Activated CD4-positive, alpha-beta T cell treated with anti-CD3 and anti-CD28 coated beads, Interleukin-2, amount 10 ng/mL, durations not matched to agents 24 days and 14 days (primary cell): ENCODE measurements at regions of chr6 and their contacts with region 1.

Region 1: DNA sequence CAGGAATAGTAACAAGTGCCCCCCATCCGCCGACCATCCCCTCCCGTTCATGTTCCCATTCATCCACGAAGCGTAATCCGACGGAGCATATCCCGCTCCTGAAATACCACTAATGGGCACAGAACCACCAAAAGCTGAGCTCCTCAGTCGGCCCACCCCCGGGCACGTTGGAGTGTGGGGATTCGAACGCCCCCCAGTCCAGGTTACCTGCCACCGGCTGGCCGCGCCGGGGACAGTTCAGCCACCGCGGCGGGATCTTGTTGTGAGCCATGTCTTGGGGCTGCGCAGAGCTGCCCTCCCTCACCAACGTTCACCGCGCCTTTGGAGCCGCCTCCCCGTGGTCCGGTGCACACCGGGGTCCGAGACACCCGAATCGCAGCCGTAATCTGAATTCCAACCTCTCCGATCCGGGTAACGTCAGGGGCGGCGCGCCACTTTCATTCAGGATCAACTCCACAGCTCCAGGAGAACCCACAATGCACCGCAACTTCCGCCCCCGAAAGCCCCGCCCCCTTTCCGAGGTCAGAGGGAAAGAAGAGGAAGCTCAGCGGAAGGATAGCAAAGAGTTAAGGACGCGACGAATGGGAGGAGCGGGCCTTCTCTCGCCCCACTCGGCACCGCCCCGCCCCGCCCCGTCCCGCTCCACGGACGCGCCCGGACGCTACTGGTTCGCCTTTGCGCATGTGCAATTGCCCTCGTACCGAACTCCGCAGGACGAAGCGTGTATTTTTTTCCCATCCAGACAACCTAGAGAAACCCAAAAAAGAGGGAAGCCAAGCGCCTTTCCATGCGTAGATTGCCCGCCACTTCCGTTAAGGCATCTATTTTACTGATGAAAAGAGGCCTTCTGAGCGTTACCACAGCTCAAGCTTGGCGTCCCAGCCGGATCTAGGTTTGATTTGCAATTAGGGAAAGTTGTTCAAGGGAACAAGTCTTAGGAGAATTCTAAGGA is at the start of gene RNGTT:
- DNase-seq: peak; percentile 99
- H3K4me3 Mint-ChIP-seq: peak within 1 kb of the TSS; percentile 98
- H3K27ac Mint-ChIP-seq: peak within 1 kb of the TSS; percentile 94
- H3K4me1 Mint-ChIP-seq: peaks cover 25% of the 10 kb centered on the region
- H3K27me3 Mint-ChIP-seq: peaks cover 4% of the 10 kb centered on the region
- total RNA-seq, gene RNGTT: 23.8 and 25.9 TPM in 2 replicates

Region 2: DNA sequence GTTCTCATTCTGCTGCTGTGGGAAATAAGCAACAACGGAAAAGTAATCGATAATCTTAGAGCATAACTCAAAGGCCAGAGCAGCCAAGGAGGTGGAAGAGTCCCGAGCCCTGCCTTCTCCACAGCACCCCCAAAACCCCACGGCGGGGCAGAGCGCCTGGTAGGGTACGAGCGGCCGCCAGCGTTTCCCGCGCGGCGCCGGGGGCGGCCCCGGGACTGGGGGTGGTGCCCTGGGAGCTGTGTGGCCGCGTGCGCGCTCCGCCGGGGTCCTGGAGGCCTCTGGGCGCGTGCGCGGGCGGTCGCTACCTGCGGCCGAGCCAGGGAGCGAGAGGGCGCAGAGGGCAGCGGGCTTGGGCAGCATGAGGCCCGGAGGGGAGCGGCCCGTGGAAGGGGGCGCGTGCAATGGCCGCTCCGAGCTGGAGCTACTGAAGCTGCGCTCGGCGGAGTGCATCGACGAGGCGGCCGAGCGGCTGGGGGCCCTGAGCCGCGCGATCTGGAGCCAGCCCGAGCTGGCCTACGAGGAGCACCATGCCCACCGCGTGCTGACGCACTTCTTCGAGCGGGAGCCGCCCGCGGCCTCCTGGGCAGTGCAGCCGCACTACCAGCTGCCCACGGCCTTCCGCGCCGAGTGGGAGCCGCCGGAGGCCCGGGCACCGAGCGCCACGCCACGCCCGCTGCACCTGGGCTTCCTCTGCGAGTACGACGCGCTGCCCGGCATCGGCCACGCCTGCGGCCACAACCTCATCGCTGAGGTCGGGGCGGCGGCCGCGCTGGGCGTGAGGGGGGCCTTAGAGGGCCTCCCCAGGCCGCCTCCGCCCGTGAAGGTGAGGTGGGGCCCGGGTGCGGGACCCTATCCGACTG is 182.6 kb after region 1 on chr6 and contains the start of gene PM20D2:
- intact Hi-C with region 1: loop called (anchors 1 kb)
- DNase-seq: peak; percentile 90
- H3K4me3 Mint-ChIP-seq: peak within 1 kb of the TSS; percentile 91
- H3K27ac Mint-ChIP-seq: peak within 1 kb of the TSS; percentile 98
- H3K4me1 Mint-ChIP-seq: peaks cover 26% of the 10 kb centered on the region
- H3K27me3 Mint-ChIP-seq: peaks cover 12% of the 10 kb centered on the region
- total RNA-seq, gene PM20D2: 18.3 and 18.9 TPM in 2 replicates

Region 3: DNA sequence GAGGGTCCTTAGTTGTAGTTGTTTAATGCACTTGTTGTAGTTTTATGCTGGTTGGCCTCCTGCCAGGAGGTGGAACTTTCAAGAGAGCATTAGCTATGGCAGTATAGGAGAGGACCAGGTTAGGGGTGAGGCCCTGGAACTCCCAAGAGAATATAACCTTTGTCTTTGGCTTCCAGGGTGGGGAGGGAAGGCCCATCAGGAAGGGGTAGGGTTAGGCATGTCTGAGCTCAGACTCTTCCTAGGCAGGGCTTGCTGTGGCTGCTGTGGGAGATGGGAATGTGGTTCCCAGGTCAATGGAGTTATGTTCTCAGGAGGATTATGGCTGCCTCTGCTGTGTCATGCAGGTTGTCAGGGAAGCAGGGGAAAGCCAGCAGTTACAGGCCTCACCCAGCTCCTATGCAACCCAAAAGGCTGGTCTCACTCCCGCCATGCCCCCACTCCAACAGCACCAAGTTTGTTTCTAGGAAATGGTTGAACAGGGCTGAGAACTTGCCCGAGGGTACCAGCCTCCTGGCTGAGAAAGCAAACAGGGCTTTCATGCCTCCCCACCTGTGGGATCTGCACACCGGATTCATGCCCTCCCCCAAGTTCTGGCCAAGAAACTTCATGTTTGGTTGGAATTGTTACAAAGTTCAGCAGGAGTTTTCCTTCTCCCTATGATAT is 273.9 kb after region 1 on chr6:
- intact Hi-C with region 1: no loop called
- DNase-seq: no peak
- H3K4me3 Mint-ChIP-seq: no peak overlapping the region
- H3K27ac Mint-ChIP-seq: no peak overlapping the region
- H3K4me1 Mint-ChIP-seq: peaks cover 15% of the 10 kb centered on the region
- H3K27me3 Mint-ChIP-seq: peaks cover 34% of the 10 kb centered on the region

Region 4: GRCh38 chr6:89638320-89639195 is 675.1 kb after region 1 on chr6 and contains the start of gene LYRM2:
- intact Hi-C with region 1: loop called (anchors 1 kb)
- DNase-seq: peak; percentile 97
- H3K4me3 Mint-ChIP-seq: peak within 1 kb of the TSS; percentile 90
- H3K27ac Mint-ChIP-seq: peak within 1 kb of the TSS; percentile 98
- H3K4me1 Mint-ChIP-seq: peaks cover 26% of the 10 kb centered on the region
- H3K27me3 Mint-ChIP-seq: no peaks in the 10 kb centered on the region
- total RNA-seq, gene LYRM2: 29.4 and 33.7 TPM in 2 replicates